ENCODE measurements at regions of chr10 and their contacts with region 1.

Region 1: GRCh38 chr10:51010977-51011376 is 63.3 kb upstream of the PRKG1 start:
- DNase-seq: no peak

Region 2: DNA sequence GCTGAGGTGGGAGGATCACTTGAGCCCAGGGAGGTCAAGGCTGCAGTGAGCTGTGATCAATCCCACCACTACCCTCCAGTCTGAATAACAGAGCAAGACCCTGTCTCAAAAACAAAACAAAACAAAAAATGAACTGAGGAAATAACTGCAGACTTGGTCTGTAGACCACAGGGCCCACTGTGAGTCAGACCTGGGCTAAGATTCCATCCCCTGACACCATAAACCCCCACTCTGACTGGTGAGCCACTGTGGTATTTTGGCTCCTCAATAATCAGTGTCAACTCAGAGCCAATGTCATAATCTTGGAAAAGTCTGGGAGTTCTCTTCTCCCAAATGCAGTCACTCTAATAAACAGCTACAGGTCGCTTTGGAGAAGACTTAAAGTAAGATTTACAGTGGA is 1448.1 kb before region 1 on chr10:
- intact Hi-C with region 1: no loop called
- DNase-seq: no peak

Region 3: DNA sequence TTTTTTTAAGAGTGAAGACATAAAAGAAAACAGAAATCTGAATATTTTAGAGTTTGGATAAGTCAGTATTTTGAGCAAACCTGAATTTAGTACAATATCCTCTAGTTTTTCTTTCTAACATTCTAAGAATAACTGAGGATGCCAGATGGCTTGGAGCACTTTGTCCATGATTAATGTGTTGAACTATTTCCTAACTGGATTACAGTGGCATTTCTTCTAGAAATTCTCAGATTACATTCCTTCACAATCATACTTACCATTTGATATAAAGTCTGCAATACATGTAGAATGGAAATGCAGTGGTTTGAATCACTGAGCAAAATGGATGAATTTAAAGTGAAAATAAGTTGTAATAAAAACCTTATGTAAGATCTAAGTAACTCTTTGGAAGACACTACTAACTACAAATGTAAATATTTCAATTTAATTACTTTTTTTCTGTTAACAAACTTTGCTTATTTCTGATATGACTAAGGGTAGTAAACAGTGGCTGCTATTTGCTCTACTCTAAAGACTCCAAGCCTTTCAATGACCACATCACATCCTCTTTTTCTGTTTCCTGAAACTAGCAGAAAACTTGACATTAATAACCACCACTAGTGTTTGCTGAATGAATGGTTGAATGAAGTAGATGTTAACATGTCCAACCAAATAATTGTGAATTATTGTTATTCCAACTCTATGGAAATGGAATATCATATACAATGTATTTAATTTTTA is 166.2 kb after region 1 on chr10:
- intact Hi-C with region 1: no loop called
- DNase-seq: no peak

Region 4: GRCh38 chr10:51950371-51950995 is 939.5 kb after region 1 on chr10:
- intact Hi-C with region 1: loop called in 1 of 2 experiments (anchors 10 kb)
- DNase-seq: peak; percentile 61

Measured in posterior vena cava (tissue), 2 donors.